ENCODE measurements at regions of chr17 and their contacts with region 1.

Region 1: DNA sequence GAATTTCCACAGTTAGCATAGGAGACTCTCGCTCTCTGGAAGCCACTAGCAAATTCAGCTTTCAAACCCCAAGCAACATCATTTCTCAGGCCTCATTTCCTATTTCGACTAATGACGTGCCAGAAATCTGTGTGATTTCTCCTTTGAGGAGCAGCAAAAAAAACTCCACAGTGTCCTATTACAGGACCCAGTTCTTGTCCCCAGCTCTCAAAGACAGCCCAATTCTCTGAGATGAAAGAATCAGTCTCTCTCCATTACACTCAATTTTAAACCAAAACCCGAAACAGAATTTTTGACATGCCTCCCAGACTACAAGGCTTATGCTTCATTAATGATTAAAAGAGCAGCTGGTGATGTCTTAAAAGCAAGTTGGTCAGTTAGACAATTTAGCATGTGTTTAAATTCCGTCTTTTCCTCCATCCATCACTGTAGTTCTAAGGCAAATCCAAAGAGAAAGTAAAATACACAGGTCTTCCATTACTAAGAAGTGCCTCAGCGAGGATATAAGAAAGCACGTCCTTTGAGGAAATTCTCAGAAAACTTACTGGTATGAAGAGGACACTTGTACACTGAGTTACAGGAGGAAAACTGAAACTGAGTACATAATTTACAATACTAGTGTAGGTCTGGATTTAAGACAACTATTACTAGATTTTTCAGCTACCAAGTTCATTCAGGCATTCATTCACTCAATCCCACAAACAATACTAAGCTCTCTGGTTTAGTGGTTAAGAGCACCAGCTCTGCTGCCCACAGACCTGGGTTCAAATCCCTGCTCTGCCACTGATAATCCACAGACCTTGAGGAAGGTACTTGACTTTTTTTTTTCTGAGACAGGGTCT is 12.5 kb downstream of the TOM1L2 start:
- DNase-seq: peak; percentile 46
- H3K4me3 Mint-ChIP-seq: peak overlapping the region; percentile 76
- H3K27ac Mint-ChIP-seq: peak overlapping the region; percentile 98
- H3K4me1 Mint-ChIP-seq: peaks cover 66% of the 10 kb centered on the region
- H3K27me3 Mint-ChIP-seq: no peaks in the 10 kb centered on the region

Region 2: GRCh38 chr17:17849845-17850373 is 109.8 kb before region 1 on chr17:
- CTCF ChIA-PET with region 1: interaction called, 3 read pairs
- POLR2A ChIA-PET with region 1: interaction called, 11 read pairs
- DNase-seq: peak; percentile 84
- H3K4me3 Mint-ChIP-seq: no peak overlapping the region
- H3K27ac Mint-ChIP-seq: peak overlapping the region; percentile 99
- H3K4me1 Mint-ChIP-seq: peaks cover 79% of the 10 kb centered on the region
- H3K27me3 Mint-ChIP-seq: no peaks in the 10 kb centered on the region

Region 3: GRCh38 chr17:17942846-17943245 is 16.9 kb before region 1 on chr17:
- CTCF ChIA-PET with region 1: interaction called, 8 read pairs
- POLR2A ChIA-PET with region 1: interaction called, 40 read pairs
- DNase-seq: no peak
- H3K4me3 Mint-ChIP-seq: no peak overlapping the region
- H3K27ac Mint-ChIP-seq: no peak overlapping the region
- H3K4me1 Mint-ChIP-seq: peaks cover 11% of the 10 kb centered on the region
- H3K27me3 Mint-ChIP-seq: no peaks in the 10 kb centered on the region

Region 4: GRCh38 chr17:17972126-17972951 is 12.6 kb after region 1 on chr17 and contains the starts of genes DRC3 and TOM1L2:
- CTCF ChIA-PET with region 1: interaction called, 37 read pairs
- POLR2A ChIA-PET with region 1: interaction called, 102 read pairs
- DNase-seq: peak; percentile 100
- H3K4me3 Mint-ChIP-seq: peak within 1 kb of the TSS; percentile 93
- H3K27ac Mint-ChIP-seq: peak within 1 kb of the TSS; percentile 83
- H3K4me1 Mint-ChIP-seq: peaks cover 42% of the 10 kb centered on the region
- H3K27me3 Mint-ChIP-seq: no peaks in the 10 kb centered on the region
- total RNA-seq, gene DRC3: not detected
- total RNA-seq, gene TOM1L2: 29.3 to 30.3 TPM

Region 5: DNA sequence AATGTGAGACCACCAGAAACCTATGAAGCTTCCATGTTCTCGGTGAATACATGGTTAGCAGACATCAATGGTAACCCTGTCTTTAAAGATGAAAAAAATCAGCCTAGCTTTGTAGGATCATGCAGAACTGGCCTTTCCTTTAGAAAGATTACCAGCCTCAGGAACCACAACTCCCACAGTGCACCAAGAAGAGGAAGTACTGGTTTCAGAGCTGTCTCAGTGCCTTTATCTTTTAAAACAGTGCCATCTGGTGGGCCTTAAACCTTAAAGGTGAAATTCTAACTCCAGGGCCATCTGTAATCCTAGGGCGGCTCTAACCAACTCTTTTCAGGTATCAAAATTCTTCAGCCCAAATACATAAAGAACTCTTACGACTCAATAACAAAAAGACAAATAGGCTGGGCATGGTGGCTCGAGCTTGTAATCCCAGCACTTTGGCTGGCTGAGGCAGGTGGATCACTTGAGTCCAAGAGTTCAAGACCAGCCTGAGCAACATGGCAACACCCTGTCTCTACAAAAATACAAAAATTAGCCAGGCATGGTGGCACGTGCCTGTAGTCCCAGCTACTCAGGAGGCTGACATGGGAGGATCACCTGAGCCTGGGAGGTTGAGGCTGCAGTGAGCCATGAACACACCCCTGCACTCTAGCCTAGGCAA is 73.8 kb after region 1 on chr17:
- CTCF ChIA-PET with region 1: interaction called, 13 read pairs
- POLR2A ChIA-PET with region 1: interaction called, 3 read pairs
- DNase-seq: peak; percentile 64
- H3K4me3 Mint-ChIP-seq: no peak overlapping the region
- H3K27ac Mint-ChIP-seq: no peak overlapping the region
- H3K4me1 Mint-ChIP-seq: peaks cover 43% of the 10 kb centered on the region
- H3K27me3 Mint-ChIP-seq: no peaks in the 10 kb centered on the region

Measured in activated CD4-positive, alpha-beta memory T cell treated with anti-CD3 and anti-CD28 coated beads, Interleukin-2, amount 10 ng/mL, durations not matched to agents 7 days and 5 days (primary cell).